Activated CD4-positive, alpha-beta memory T cell treated with anti-CD3 and anti-CD28 coated beads, Interleukin-2, amount 10 ng/mL, durations not matched to agents 7 days and 5 days (primary cell): ENCODE measurements at regions of chr12 and their contacts with region 1.

Region 1: GRCh38 chr12:68040450-68041075 is 51.3 kb downstream of the IFNG-AS1 start:
- DNase-seq: peak; percentile 70
- H3K4me3 Mint-ChIP-seq: no peak overlapping the region
- H3K27ac Mint-ChIP-seq: peak overlapping the region; percentile 11
- H3K4me1 Mint-ChIP-seq: peaks cover 36% of the 10 kb centered on the region
- H3K27me3 Mint-ChIP-seq: no peaks in the 10 kb centered on the region

Region 2: DNA sequence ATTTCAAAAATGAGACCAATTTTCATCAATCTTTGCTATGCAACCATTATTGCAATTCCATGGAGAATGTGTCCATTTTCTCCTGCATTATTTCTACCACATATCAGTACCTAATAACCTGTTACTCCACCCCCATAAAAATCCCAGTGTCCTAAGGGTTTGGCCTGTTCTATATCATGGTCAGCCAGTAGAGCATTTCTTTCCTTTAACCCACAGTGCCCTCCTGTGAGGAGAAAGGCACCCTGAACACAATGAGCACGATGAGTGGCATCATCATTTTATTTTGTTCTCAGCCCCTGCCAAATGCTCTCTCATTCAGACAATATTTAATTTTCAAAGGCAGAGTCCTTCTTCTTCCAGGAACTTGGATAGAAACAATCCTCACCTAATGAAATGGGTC is 62.9 kb before region 1 on chr12:
- CTCF ChIA-PET with region 1: no interaction called
- POLR2A ChIA-PET with region 1: no interaction called
- DNase-seq: no peak
- H3K4me3 Mint-ChIP-seq: no peak overlapping the region
- H3K27ac Mint-ChIP-seq: no peak overlapping the region
- H3K4me1 Mint-ChIP-seq: no peaks in the 10 kb centered on the region
- H3K27me3 Mint-ChIP-seq: peaks cover 5% of the 10 kb centered on the region

Region 3: GRCh38 chr12:68113644-68114043 is 73.1 kb after region 1 on chr12:
- CTCF ChIA-PET with region 1: interaction called, 12 read pairs
- POLR2A ChIA-PET with region 1: interaction called, 3 read pairs
- DNase-seq: peak; percentile 64
- H3K4me3 Mint-ChIP-seq: no peak overlapping the region
- H3K27ac Mint-ChIP-seq: no peak overlapping the region
- H3K4me1 Mint-ChIP-seq: peaks cover 39% of the 10 kb centered on the region
- H3K27me3 Mint-ChIP-seq: no peaks in the 10 kb centered on the region

Region 4: GRCh38 chr12:68317047-68317667 is 276.6 kb after region 1 on chr12:
- CTCF ChIA-PET with region 1: interaction called, 20 read pairs
- POLR2A ChIA-PET with region 1: no interaction called
- DNase-seq: peak; percentile 46
- H3K4me3 Mint-ChIP-seq: no peak overlapping the region
- H3K27ac Mint-ChIP-seq: no peak overlapping the region
- H3K4me1 Mint-ChIP-seq: peaks cover 5% of the 10 kb centered on the region
- H3K27me3 Mint-ChIP-seq: no peaks in the 10 kb centered on the region